ENCODE measurements at regions of chr15 and their contacts with region 1.

Region 1: GRCh38 chr15:98779463-98780071 is 131.2 kb downstream of the IGF1R start:
- DNase-seq: peak; percentile 41
- ATAC-seq: peak; percentile 89
- H3K4me3 ChIP-seq: no peak overlapping the region
- H3K27ac ChIP-seq: no peak overlapping the region
- H3K4me1 ChIP-seq: peaks cover 19% of the 10 kb centered on the region
- H3K27me3 ChIP-seq: no peaks in the 10 kb centered on the region
- CTCF ChIP-seq: peak; percentile 80 to 99 (median 96)
- EP300 ChIP-seq: no peak
- POLR2A ChIP-seq: no peak
- RAD21 ChIP-seq: peak; percentile 84

Region 2: DNA sequence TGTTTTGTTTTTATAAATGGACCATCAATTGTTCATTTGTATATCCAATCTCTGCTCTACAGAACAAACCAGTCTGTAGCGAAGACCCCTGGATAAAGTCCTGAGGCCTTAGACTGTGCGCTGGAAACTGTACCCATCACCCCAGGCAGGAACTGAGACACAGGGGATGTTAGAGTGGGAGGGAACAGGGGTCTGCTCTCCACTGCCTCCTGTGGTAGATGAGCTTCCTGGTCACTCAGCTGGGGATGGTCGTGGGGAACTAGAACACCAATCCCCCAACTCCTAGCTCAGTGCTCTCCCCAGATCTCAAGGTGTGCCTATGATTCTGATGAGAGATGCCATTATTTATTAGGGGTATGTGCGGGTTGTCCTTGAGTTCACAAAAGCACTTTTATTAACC is 471.4 kb before region 1 on chr15:
- CTCF ChIA-PET with region 1: no interaction called
- POLR2A ChIA-PET with region 1: no interaction called
- RAD21 ChIA-PET with region 1: no interaction called
- SMC1A ChIA-PET with region 1: no interaction called
- in situ Hi-C with region 1: no loop called
- intact Hi-C with region 1: no loop called
- DNase-seq: no peak
- ATAC-seq: no peak
- H3K4me3 ChIP-seq: no peak overlapping the region
- H3K27ac ChIP-seq: no peak overlapping the region
- H3K4me1 ChIP-seq: no peaks in the 10 kb centered on the region
- H3K27me3 ChIP-seq: no peaks in the 10 kb centered on the region
- CTCF ChIP-seq: no peak
- EP300 ChIP-seq: no peak
- POLR2A ChIP-seq: no peak
- RAD21 ChIP-seq: no peak

Region 3: GRCh38 chr15:98518823-98519561 is 260.6 kb before region 1 on chr15:
- CTCF ChIA-PET with region 1: interaction called, 3 read pairs
- POLR2A ChIA-PET with region 1: no interaction called
- RAD21 ChIA-PET with region 1: no interaction called
- SMC1A ChIA-PET with region 1: no interaction called
- in situ Hi-C with region 1: no loop called
- intact Hi-C with region 1: loop called (anchors 5 kb)
- DNase-seq: no peak
- ATAC-seq: peak; percentile 95
- H3K4me3 ChIP-seq: no peak overlapping the region
- H3K27ac ChIP-seq: no peak overlapping the region
- H3K4me1 ChIP-seq: no peaks in the 10 kb centered on the region
- H3K27me3 ChIP-seq: no peaks in the 10 kb centered on the region
- CTCF ChIP-seq: peak; percentile 64 to 75 (median 68)
- EP300 ChIP-seq: no peak
- POLR2A ChIP-seq: no peak
- RAD21 ChIP-seq: peak; percentile 75

Region 4: DNA sequence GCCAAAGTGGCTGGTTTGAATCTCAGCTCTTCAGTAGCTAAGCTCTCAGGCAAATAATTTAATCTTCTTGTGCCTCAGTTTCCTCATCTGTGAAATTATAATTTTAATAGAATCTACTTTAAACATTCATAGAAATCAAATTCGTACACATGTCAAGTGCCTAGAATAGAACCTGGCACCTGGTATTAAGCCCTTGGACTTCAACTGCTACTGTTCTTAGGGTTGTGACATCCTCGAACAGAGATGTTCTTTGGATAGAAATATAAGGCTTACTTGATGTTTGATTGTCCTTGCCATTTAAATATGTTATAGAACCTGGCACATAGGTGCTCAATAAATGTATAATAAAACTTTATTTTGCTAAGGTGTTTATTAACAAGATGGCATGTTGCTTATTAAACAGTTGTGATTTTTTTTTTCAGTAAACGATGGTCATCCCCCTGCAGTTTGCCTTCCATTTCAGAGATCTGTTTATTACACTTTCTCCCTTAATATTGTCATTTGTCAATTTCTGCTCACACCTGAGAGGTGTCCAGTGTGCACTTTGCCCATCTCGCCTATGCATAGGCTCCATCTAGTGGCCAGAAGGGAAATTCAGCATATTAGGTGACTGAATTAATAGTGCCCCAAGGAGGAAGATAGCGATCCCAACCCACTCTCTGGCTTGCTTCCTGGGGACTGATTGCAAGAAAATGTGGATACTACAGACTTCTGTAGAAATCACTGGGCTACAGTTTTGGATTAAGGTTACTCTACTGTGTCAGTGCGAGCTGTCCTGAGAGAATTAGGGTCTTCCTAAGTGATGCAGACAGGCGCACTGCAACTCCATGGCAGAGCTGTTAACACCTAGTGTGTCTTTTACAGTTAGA is 120.5 kb before region 1 on chr15:
- CTCF ChIA-PET with region 1: interaction called, 5 read pairs
- POLR2A ChIA-PET with region 1: no interaction called
- RAD21 ChIA-PET with region 1: no interaction called
- SMC1A ChIA-PET with region 1: no interaction called
- in situ Hi-C with region 1: no loop called
- intact Hi-C with region 1: loop called (anchors 5 kb)
- DNase-seq: peak; percentile 11
- ATAC-seq: peak; percentile 96
- H3K4me3 ChIP-seq: no peak overlapping the region
- H3K27ac ChIP-seq: no peak overlapping the region
- H3K4me1 ChIP-seq: no peaks in the 10 kb centered on the region
- H3K27me3 ChIP-seq: no peaks in the 10 kb centered on the region
- CTCF ChIP-seq: peak; percentile 85 to 91 (median 87); a peak in 5 of 6 replicates
- EP300 ChIP-seq: no peak
- POLR2A ChIP-seq: no peak
- RAD21 ChIP-seq: peak; percentile 76

Region 5: DNA sequence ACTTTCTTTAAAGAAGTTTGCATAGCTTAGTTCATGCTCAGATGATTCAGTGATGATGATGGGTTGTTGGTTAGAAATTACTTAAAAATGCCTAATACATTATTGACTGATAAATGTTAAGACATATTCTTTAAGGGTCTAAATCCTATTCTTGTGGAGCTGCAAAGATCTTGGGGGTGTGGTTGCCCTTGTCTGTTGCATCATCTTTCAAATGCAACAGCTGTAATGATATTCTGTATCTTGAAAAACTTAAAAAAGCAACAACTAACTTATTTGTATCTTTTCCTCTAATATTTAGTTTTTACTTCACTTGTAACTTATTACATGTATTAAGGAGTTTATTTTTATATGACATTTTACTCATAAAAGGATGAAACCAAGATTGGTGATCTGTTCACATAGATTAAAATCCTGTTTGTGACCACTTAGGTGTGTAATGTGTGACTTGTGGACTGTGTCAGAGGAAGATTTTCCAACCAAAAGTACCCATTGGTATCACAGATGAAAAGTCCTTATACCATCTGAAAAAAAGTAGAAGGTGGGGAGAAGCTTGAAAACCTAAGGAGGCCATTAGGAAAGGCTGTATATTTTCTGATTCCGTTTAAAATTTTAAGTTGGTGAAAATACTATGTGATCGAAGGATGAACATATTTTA is 11.6 kb after region 1 on chr15:
- CTCF ChIA-PET with region 1: interaction called, 16 read pairs
- POLR2A ChIA-PET with region 1: no interaction called
- RAD21 ChIA-PET with region 1: no interaction called
- SMC1A ChIA-PET with region 1: interaction called, 4 read pairs
- in situ Hi-C with region 1: no loop called
- intact Hi-C with region 1: no loop called
- DNase-seq: no peak
- ATAC-seq: no peak
- H3K4me3 ChIP-seq: no peak overlapping the region
- H3K27ac ChIP-seq: no peak overlapping the region
- H3K4me1 ChIP-seq: no peaks in the 10 kb centered on the region; the same call in 1 of the 2 replicates
- H3K27me3 ChIP-seq: no peaks in the 10 kb centered on the region
- CTCF ChIP-seq: no peak
- EP300 ChIP-seq: no peak
- POLR2A ChIP-seq: no peak
- RAD21 ChIP-seq: no peak

Region 6: DNA sequence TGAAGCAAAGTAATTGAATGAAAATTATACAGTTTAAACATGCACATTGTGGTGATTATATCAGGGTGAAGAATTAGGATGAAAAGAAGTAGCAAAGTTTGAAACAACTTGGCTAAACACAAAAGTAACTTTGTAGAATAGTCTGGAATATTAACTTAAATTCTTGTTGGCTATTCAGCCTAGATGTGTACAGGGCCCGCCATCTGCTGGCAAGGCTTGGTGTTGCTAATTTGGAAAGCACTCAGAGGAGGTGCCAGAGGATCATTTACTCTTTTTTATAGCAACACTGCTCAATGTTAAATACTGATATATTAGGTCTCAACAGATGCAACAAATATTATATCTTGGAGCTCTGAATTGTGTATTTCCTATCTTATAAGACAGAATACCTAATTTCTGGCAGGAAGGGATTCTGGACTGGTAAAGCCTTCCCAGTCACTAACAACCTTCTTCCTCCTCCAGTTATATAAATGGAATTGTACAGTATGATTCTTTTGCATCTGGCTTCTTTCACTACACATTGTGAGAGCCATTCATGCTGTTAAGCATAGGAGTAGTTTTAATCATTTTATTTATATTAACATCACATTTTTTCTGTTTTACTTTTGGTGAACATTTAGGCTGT is 433.7 kb after region 1 on chr15:
- CTCF ChIA-PET with region 1: interaction called, 3 read pairs
- POLR2A ChIA-PET with region 1: no interaction called
- RAD21 ChIA-PET with region 1: no interaction called
- SMC1A ChIA-PET with region 1: no interaction called
- in situ Hi-C with region 1: loop called (anchors 10 kb)
- intact Hi-C with region 1: loop called (anchors 5 kb)
- DNase-seq: peak; percentile 4
- ATAC-seq: peak; percentile 93
- H3K4me3 ChIP-seq: no peak overlapping the region
- H3K27ac ChIP-seq: no peak overlapping the region
- H3K4me1 ChIP-seq: no peaks in the 10 kb centered on the region
- H3K27me3 ChIP-seq: no peaks in the 10 kb centered on the region
- CTCF ChIP-seq: peak; percentile 83 to 92 (median 85)
- EP300 ChIP-seq: no peak
- POLR2A ChIP-seq: no peak
- RAD21 ChIP-seq: peak; percentile 94

Measured in GM12878 (cell line).